Activated CD4-positive, alpha-beta memory T cell treated with anti-CD3 and anti-CD28 coated beads for 36 hours (primary cell): ENCODE measurements at regions of chr6 and their contacts with region 1.

Region 1: DNA sequence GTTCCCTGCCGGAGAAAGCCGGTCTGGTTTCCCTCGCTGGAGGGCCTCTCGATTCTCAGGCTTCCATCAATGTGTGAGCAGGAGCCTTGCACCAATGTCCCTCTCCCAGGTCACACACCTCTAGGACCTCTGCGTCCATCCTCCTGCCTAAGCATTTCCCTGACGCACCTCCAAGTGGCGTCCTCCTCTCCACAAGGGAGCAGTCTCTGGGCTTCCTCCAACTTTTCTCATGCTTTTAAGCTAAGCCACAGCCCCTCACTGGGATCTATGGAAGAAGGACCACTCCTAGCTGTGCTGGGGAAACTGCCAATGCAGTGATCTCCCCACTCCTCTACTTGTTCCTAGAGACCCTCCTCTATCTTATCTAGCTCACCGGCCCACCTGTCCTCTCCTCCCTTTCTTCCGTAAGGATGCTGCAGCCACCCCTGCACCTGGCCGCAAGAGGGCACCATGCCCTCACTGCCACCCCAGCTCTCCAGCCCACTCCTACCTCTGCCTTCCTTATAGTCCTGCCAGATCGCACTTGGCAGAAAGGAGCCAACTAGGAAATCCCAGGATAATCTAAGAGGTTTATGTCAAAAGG is 258.7 kb downstream of the LRFN2 start:
- DNase-seq: peak; percentile 42
- H3K4me3 Mint-ChIP-seq: no peak overlapping the region
- H3K27ac Mint-ChIP-seq: no peak overlapping the region
- H3K4me1 Mint-ChIP-seq: no peaks in the 10 kb centered on the region
- H3K27me3 Mint-ChIP-seq: peaks cover 19% of the 10 kb centered on the region

Region 2: DNA sequence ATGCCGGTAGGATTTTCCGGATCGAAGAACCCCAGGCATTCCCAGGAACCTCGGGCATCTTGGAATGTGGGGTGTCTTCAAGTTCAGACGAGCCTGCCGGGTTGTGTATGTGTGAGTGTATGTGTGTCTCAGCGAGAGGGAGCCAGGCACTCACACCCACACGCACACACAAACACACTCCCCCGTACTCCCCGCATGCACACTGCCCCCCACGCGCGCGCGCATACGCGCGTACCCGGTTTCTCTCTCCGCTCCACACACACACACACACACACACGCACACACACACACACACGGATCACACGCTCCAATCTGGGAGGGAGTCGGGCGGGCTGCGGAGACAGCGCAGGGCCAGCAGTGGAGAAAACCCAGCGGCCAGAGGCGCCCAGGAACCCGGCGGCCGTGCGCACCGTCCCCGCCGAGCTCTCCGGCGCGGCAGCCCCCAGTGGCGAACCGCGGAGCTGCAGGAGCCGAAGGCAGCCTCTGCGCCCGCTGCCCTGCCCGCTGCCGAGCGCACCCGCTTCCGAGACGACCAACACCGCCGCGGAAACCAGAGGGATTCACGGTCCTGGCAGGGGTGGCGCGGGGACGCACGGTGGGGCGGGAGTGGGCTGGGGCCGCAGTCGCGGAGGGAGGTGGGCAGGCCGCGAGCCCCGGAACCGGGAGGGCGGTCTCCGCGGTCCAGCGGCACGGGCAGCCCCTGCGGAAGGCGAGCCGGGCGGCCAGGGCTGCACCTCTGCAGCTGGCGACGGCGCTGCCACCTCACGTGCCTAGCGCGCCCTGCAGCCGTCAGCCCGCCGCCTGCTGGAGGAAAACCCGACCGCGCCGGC is 259.0 kb after region 1 on chr6 and contains the start of gene LRFN2:
- CTCF ChIA-PET with region 1: no interaction called
- POLR2A ChIA-PET with region 1: no interaction called
- intact Hi-C with region 1: loop called (anchors 5 kb)
- DNase-seq: peak; percentile 73
- H3K4me3 Mint-ChIP-seq: peak within 1 kb of the TSS; percentile 62
- H3K27ac Mint-ChIP-seq: no peak within 1 kb of the TSS
- H3K4me1 Mint-ChIP-seq: peaks cover 11% of the 10 kb centered on the region
- H3K27me3 Mint-ChIP-seq: peaks cover 43% of the 10 kb centered on the region
- total RNA-seq, gene LRFN2: not detected

Region 3: GRCh38 chr6:40822619-40823018 is 494.1 kb after region 1 on chr6:
- CTCF ChIA-PET with region 1: no interaction called
- POLR2A ChIA-PET with region 1: no interaction called
- intact Hi-C with region 1: loop called (anchors 10 kb)
- DNase-seq: no peak
- H3K4me3 Mint-ChIP-seq: no peak overlapping the region
- H3K27ac Mint-ChIP-seq: no peak overlapping the region
- H3K4me1 Mint-ChIP-seq: no peaks in the 10 kb centered on the region
- H3K27me3 Mint-ChIP-seq: peaks cover 2% of the 10 kb centered on the region

Region 4: GRCh38 chr6:40912158-40912946 is 583.9 kb after region 1 on chr6:
- CTCF ChIA-PET with region 1: no interaction called
- POLR2A ChIA-PET with region 1: no interaction called
- intact Hi-C with region 1: loop called (anchors 5 kb)
- DNase-seq: peak; percentile 54
- H3K4me3 Mint-ChIP-seq: no peak overlapping the region
- H3K27ac Mint-ChIP-seq: no peak overlapping the region
- H3K4me1 Mint-ChIP-seq: peaks cover 6% of the 10 kb centered on the region
- H3K27me3 Mint-ChIP-seq: peaks cover 13% of the 10 kb centered on the region